ENCODE measurements at regions of chr11 and their contacts with region 1.

Region 1: GRCh38 chr11:118198370-118198769 is 21.9 kb upstream of the SCN2B start:
- DNase-seq: peak; percentile 53 to 96 (median 81)

Region 2: GRCh38 chr11:118180300-118180703 is 18.1 kb before region 1 on chr11:
- intact Hi-C with region 1: loop called (anchors 2 kb)
- DNase-seq: peak; percentile 83 to 99 (median 90)

Region 3: DNA sequence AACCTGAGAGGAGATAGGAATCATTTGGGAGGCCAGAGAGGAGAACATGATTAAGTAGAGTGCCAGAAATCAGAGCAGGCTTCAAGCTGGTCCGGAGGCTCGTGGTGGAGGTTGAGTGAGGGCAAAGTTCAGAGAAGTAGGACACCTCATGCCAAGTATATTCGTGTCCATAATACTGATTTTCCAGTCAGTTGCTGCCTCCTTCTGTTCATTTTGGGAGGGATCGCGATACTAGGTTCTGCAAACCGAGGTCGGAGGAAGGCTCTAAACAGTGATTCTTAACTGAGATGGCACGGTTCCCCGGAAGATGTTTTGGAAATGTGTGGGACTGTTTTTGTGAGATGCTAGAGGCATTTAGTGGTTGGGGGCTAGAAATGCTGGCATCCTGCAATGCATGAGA is 92.6 kb after region 1 on chr11:
- intact Hi-C with region 1: loop called (anchors 1 kb)
- DNase-seq: peak in 1 of 10 donors; percentile 10

Region 4: DNA sequence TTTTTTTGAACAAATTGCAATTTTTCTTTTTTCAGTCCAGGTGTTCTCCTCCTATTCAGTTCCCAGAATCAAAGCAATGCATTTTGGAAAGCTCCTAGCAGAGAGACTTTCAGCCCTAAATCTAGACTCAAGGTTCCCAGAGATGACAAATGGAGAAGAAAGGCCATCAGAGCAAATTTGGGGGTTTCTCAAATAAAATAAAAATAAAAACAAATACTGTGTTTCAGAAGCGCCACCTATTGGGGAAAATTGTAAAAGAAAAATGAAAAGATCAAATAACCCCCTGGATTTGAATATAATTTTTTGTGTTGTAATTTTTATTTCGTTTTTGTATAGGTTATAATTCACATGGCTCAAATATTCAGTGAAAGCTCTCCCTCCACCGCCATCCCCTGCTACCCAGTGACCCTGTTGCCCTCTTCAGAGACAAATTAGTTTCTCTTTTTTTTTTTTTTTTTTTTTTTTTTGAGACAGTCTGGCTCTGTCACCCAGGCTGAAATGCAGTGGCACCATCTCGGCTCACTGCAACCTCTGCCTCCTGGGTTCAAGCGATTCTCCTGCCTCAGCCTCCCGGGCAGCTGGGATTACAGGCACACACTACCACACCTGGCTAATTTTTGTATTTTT is 154.8 kb after region 1 on chr11:
- intact Hi-C with region 1: loop called (anchors 1 kb)
- DNase-seq: no peak

Region 5: DNA sequence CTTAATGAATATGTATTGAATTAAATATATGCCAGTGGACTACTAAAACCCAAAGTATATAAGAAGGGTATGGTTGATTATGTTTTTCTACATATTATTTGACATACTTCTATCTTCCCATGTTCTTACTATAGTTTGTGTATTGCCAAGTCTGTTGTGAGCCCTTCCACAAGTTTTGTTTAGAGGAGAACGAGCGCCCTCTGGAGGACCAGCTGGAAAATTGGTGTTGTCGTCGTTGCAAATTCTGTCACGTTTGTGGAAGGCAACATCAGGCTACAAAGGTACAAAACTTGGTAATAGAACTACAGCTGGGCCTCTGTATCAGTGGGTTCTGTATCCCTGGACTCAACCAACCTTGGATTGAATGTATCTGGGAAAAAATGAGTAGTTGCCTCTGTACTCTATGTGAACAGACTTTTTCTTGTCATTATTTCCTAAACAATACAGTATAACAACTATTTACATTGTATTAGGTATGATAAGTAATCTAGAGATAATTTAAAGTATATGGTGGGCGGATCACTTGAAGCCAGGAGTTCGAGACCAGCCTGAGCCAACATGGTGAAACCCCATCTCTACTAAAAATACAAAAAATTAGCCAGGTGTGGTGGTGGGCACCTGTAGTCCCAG is 290.2 kb after region 1 on chr11:
- intact Hi-C with region 1: loop called (anchors 5 kb)
- DNase-seq: peak; percentile 37 to 95 (median 68)

Measured in posterior cingulate gyrus (tissue), 11 donors.